Panc1 (cell line): ENCODE measurements at regions of chr5 and their contacts with region 1.

Region 1: GRCh38 chr5:5419294-5420210 is 2.9 kb upstream of the ICE1 start:
- DNase-seq: peak; percentile 65
- ATAC-seq: no peak
- H3K4me3 ChIP-seq: no peak overlapping the region
- H3K27ac ChIP-seq: no peak overlapping the region
- H3K4me1 ChIP-seq: peaks cover 27% of the 10 kb centered on the region
- H3K27me3 ChIP-seq: no peaks in the 10 kb centered on the region
- CTCF ChIP-seq: peak; percentile 87

Region 2: DNA sequence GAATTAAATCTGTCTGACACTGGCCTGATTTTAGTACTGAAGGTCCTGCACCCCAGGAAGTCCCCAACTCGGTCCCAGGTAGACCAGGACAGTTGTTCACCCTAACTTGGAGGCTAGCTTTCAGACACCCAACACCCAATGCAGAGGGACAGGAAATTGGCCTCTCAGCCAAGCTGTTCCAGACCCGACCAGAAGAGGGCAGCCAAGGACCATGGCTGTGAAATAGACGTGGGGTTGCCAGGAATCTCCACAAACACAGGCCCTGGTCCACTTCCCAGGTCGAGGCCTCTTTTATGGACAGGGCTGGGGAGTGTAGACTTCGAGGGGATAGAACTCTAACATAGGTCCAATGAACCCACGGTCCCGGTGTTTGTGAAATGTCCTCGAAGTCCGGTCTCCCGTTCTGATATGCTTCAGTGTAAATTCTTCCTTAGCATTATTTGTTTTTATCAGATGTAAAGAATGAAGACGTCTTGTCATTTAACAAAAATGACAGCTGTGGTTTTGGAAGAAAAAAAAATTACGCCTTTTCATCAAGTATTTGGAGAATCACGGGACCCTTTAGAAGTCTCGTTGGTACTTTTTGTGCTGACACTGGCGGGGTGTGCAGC is 539.8 kb before region 1 on chr5:
- CTCF ChIA-PET with region 1: interaction called, 8 read pairs
- POLR2A ChIA-PET with region 1: no interaction called
- in situ Hi-C with region 1: no loop called
- intact Hi-C with region 1: loop called (anchors 1 kb)
- DNase-seq: peak; percentile 66
- ATAC-seq: peak; percentile 89
- H3K4me3 ChIP-seq: no peak overlapping the region
- H3K27ac ChIP-seq: no peak overlapping the region
- H3K4me1 ChIP-seq: no peaks in the 10 kb centered on the region
- H3K27me3 ChIP-seq: peaks cover 2% of the 10 kb centered on the region; the same call in 1 of the 2 replicates
- CTCF ChIP-seq: peak; percentile 98